ENCODE measurements at regions of chr18 and their contacts with region 1.

Region 1: DNA sequence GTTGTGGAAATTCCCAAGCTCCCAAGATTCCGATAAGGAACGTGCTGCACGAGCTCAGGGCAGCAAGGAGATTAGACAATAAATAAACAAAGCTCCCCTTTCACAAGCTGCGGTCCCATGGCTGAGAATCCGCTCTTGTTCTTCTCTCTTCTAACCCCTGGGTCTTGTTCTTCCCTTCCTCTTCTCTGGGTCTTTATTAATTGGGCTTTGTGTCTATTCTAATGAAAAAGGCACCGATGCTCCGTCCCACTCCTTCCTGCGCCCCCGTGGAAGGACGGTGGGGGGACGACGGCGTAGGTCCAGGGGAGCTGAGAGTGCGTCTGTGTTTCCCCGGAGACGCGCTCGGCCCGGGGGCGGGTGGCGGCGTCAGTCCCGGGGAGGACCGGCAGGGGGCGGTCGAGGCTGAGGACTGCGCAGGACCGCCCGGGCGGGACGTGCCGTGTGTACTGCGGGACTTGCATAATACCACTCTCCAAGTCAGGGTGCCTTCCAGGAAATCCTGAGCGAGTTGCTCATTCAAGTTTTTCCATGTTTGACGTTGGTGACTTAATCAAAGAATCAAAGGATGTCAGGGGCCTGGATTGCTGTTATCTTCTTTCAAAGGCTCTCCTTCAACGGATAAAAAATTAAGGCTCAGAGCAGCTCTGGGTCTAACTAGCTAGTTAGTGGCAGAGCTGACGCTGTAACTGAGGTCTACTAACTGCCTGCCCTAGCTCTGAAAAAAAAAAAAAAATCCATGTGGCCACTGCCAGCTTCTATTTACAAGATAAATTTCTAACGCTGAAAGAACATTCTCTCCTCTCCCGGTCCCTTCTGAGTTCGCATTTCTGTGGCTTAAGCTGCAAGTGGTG is 321.4 kb downstream of the TGIF1 start:
- DNase-seq: peak; percentile 88
- H3K4me3 ChIP-seq: peak overlapping the region; percentile 52
- H3K27ac ChIP-seq: peak overlapping the region; percentile 77
- H3K27me3 ChIP-seq: no peaks in the 10 kb centered on the region
- CTCF ChIP-seq: peak; percentile 85

Region 2: GRCh38 chr18:3703732-3704176 is 67.6 kb before region 1 on chr18:
- CTCF ChIA-PET with region 1: interaction called, 36 read pairs
- POLR2A ChIA-PET with region 1: no interaction called
- DNase-seq: peak; percentile 42
- H3K4me3 ChIP-seq: no peak overlapping the region
- H3K27ac ChIP-seq: peak overlapping the region; percentile 2
- H3K27me3 ChIP-seq: no peaks in the 10 kb centered on the region
- CTCF ChIP-seq: peak; percentile 91

Region 3: GRCh38 chr18:3758531-3758930 is 12.8 kb before region 1 on chr18:
- CTCF ChIA-PET with region 1: interaction called, 22 read pairs
- POLR2A ChIA-PET with region 1: no interaction called
- DNase-seq: no peak
- H3K4me3 ChIP-seq: no peak overlapping the region
- H3K27ac ChIP-seq: no peak overlapping the region
- H3K27me3 ChIP-seq: no peaks in the 10 kb centered on the region
- CTCF ChIP-seq: no peak

Region 4: DNA sequence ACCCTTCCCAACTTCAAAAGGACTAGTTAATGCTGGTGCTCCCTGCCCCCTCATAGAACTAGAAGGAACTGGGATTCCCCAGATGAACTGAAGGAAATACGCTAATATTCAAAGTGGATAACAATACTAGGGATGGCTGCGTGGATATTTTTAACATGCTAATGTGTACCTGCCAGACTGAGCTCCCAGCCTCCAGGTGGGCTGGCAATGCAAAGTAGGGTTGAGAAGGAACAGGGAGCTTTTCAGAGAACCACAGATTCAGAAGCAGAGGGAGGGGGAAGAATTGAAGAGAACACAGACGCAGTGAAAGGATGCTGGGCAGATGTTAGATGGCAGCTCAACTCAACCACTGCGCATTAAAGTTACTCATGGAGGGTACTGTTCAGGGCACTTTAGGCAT is 33.0 kb after region 1 on chr18:
- CTCF ChIA-PET with region 1: interaction called, 10 read pairs
- POLR2A ChIA-PET with region 1: no interaction called
- DNase-seq: no peak
- H3K4me3 ChIP-seq: no peak overlapping the region
- H3K27ac ChIP-seq: no peak overlapping the region
- H3K27me3 ChIP-seq: no peaks in the 10 kb centered on the region
- CTCF ChIP-seq: no peak

Region 5: DNA sequence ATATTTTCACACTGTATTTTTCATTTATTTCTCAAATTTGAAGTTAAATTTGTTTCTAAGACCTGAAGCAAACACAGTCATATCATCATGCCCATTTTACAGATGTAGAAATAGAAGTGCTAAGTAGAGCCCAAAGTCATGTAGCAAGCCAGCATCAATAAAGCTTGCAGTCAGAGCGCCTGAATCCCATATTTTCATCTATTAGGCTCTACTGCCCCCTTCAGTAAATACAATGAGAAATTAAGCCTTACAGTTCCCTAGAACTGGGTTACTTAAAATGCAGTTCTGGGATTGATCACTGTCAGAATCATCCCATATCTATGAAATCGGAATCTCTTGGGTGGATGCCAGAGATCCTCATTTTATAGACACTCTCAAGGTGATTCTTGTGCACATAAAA is 98.5 kb after region 1 on chr18:
- CTCF ChIA-PET with region 1: interaction called, 120 read pairs
- POLR2A ChIA-PET with region 1: interaction called, 3 read pairs
- DNase-seq: peak; percentile 27
- H3K4me3 ChIP-seq: no peak overlapping the region
- H3K27ac ChIP-seq: no peak overlapping the region
- H3K27me3 ChIP-seq: no peaks in the 10 kb centered on the region
- CTCF ChIP-seq: peak; percentile 61

Region 6: GRCh38 chr18:4765401-4765800 is 994.1 kb after region 1 on chr18:
- CTCF ChIA-PET with region 1: no interaction called
- POLR2A ChIA-PET with region 1: no interaction called
- DNase-seq: no peak
- H3K4me3 ChIP-seq: no peak overlapping the region
- H3K27ac ChIP-seq: no peak overlapping the region
- H3K27me3 ChIP-seq: no peaks in the 10 kb centered on the region
- CTCF ChIP-seq: no peak

Measured in AG04450 (cell line).